ENCODE measurements at regions of chr2 and their contacts with region 1.

Region 1: DNA sequence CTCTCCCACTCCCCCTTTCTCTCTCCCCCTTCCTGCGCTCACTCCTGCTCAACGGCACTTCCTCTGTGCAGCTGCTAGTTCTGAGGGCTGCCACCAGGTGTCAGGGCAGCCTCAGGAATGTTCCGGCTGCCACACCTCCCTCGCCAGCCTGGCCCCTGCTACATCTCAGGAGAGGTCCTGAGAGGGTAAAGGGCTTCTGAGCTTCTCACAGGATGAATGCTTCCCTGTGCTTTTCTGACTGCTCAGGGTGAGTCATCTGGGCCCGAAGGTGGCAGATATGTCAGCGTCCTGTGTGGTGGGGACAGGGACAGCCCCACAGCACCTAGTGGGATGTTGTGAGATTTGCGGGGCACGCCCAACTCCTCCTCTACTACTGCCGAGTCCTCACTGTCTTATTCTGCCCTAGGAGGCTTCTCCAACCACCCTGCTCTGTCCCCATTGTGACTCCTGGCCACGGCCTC is 49.0 kb downstream of the PLEKHB2 start:
- DNase-seq: peak; percentile 67 to 79
- H3K4me3 ChIP-seq: no peak overlapping the region
- H3K4me1 ChIP-seq: no peaks in the 10 kb centered on the region
- H3K27me3 ChIP-seq: no peaks in the 10 kb centered on the region

Region 2: GRCh38 chr2:131349021-131349420 is 194.9 kb after region 1 on chr2:
- in situ Hi-C with region 1: loop called (anchors 25 kb)
- DNase-seq: no peak
- H3K4me3 ChIP-seq: no peak overlapping the region
- H3K4me1 ChIP-seq: no peaks in the 10 kb centered on the region
- H3K27me3 ChIP-seq: no peaks in the 10 kb centered on the region